ENCODE measurements at regions of chr6 and their contacts with region 1.

Region 1: DNA sequence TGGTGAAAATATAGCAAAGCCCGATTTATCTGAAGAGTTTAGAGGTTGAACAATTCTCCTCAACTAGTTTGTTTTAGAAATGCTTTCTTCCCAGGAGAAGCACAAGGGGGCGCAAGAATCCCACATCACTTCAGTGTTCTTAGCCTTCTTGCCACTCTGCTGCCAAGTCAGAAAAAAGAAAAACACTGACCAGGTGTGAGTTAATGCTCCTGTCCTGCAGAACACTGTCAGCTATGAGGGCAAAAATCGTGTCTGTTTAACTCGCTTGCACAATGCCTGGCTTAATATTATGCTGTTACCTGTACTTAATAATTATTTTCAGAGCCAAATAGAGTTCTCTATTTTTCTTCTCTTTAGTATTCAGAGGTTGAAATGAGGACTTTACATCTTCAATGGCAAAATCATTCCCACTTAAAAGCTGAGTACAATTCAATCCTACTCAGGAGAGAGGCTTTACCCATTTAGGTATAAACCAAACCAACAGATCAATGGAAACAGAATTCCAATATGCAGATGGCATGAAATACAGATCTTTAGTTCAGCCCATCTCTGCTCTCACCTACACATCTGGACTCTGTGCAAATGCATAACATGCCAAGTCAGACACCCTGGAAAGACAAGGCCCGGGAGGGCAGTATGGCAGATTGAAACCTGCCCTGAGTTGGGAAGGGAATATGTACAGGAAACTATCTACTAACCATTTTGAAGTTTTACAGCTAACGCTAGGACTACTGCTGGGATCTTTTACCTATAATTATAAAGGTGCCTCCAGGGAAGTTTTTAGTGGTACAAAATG is 71.4 kb upstream of the TULP1 start:
- DNase-seq: peak in 4 of 5 donors; percentile 42 to 74 (median 62)
- ATAC-seq: peak; percentile 29 to 73 (median 65)
- H3K4me3 ChIP-seq: no peak overlapping the region
- H3K27ac ChIP-seq: peak overlapping the region in 4 of 12 donors; percentile 4 to 92 (median 59)
- H3K4me1 ChIP-seq: peaks cover 0 to 62% (median 15%) of the 10 kb centered on the region in 12 donors
- H3K27me3 ChIP-seq: no peaks in the 10 kb centered on the region
- CTCF ChIP-seq: peak; percentile 65 to 91 (median 87)
- POLR2A ChIP-seq: no peak

Region 2: DNA sequence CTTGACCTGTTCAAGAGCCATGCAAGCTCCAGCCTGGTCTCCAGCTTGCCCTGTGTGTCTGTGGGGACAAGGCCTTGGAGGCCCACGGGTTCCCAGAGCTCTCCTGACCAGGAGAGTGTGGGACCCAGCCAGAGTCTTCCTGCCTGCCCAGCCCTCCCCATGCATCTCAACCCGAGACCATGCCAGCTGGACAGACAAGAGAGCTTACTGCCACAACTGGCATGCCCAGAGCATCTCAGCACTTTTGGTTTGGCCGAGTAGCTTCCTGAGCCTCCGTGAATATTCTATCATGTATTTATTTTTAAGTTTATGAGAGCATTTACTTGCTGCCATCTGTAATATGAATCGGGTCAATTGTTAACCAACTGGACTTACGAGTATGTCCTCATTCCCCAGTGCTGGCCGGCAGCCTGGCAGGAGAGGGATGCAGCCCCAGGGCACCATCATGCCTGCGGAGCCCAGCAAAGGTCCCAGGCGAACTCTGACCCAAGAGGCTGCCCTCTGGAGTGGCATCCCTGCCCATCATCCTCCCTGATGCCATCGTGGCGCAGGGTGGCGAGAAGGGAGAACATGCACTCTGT is 1852.2 kb before region 1 on chr6:
- intact Hi-C with region 1: no loop called
- DNase-seq: peak in 3 of 5 donors; percentile 26 to 62 (median 40)
- ATAC-seq: peak in 2 of 4 donors; percentile 10 to 25
- H3K4me3 ChIP-seq: no peak overlapping the region
- H3K27ac ChIP-seq: peak overlapping the region; percentile 42 to 91 (median 82)
- H3K4me1 ChIP-seq: peaks cover 2 to 96% (median 43%) of the 10 kb centered on the region in 12 donors
- H3K27me3 ChIP-seq: no peaks in the 10 kb centered on the region
- CTCF ChIP-seq: no peak
- POLR2A ChIP-seq: no peak

Region 3: GRCh38 chr6:35275744-35276260 is 308.3 kb before region 1 on chr6:
- intact Hi-C with region 1: no loop called
- DNase-seq: no peak
- ATAC-seq: peak in 3 of 4 donors; percentile 5 to 8 (median 5)
- H3K4me3 ChIP-seq: no peak overlapping the region
- H3K27ac ChIP-seq: peak overlapping the region in 11 of 12 donors; percentile 4 to 71 (median 54)
- H3K4me1 ChIP-seq: peaks cover 0 to 33% (median 18%) of the 10 kb centered on the region in 12 donors
- H3K27me3 ChIP-seq: no peaks in the 10 kb centered on the region
- CTCF ChIP-seq: no peak
- POLR2A ChIP-seq: no peak

Region 4: GRCh38 chr6:35601331-35602132 is 17.4 kb after region 1 on chr6:
- intact Hi-C with region 1: loop called in 1 of 10 experiments (anchors 2 kb)
- DNase-seq: peak in 4 of 5 donors; percentile 17 to 74 (median 43)
- ATAC-seq: peak; percentile 88 to 91 (median 90)
- H3K4me3 ChIP-seq: peak overlapping the region in 10 of 12 donors; percentile 5 to 46 (median 27)
- H3K27ac ChIP-seq: peak overlapping the region; percentile 84 to 100 (median 94)
- H3K4me1 ChIP-seq: peaks cover 29 to 100% (median 45%) of the 10 kb centered on the region in 12 donors
- H3K27me3 ChIP-seq: no peaks in the 10 kb centered on the region
- CTCF ChIP-seq: no peak
- POLR2A ChIP-seq: no peak

Region 5: DNA sequence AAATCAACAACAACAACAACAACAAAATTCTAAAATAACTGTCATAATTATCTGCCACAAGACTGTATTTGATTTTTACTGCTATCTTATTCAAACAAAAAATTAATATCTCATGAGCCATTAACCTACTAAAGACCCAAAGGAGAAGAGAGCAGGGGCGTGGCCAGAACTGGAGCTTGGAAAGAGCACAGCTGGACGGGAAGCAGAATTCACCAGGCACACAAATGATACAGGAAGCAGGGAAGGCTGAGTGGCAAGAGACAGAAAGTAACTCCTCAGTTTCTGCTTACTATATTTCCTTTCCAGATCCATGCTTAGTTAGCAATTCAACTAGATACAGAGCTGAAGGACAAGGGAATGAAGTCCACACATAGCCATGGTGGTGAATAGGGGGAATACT is 50.2 kb after region 1 on chr6:
- intact Hi-C with region 1: loop called in 2 of 10 experiments (anchors 5 to 10 kb)
- DNase-seq: peak in 4 of 5 donors; percentile 25 to 58 (median 34)
- ATAC-seq: peak; percentile 20 to 73 (median 68)
- H3K4me3 ChIP-seq: no peak overlapping the region
- H3K27ac ChIP-seq: peak overlapping the region in 5 of 12 donors; percentile 2 to 23 (median 18)
- H3K4me1 ChIP-seq: peaks cover 0 to 16% (median 7%) of the 10 kb centered on the region in 12 donors
- H3K27me3 ChIP-seq: no peaks in the 10 kb centered on the region
- CTCF ChIP-seq: no peak
- POLR2A ChIP-seq: no peak

Region 6: GRCh38 chr6:35650015-35650414 is 65.9 kb after region 1 on chr6:
- intact Hi-C with region 1: no loop called
- DNase-seq: no peak
- ATAC-seq: no peak
- H3K4me3 ChIP-seq: no peak overlapping the region
- H3K27ac ChIP-seq: no peak overlapping the region
- H3K4me1 ChIP-seq: peaks cover 0 to 51% (median 0%) of the 10 kb centered on the region in 12 donors
- H3K27me3 ChIP-seq: no peaks in the 10 kb centered on the region
- CTCF ChIP-seq: no peak
- POLR2A ChIP-seq: no peak

Region 7: GRCh38 chr6:35731736-35732532 is 147.8 kb after region 1 on chr6:
- intact Hi-C with region 1: loop called (anchors 1 to 2 kb)
- DNase-seq: peak; percentile 96 to 99 (median 97)
- ATAC-seq: peak; percentile 57 to 80 (median 76)
- H3K4me3 ChIP-seq: peak overlapping the region; percentile 56 to 98 (median 73)
- H3K27ac ChIP-seq: peak overlapping the region; percentile 96 to 100 (median 100)
- H3K4me1 ChIP-seq: peaks cover 21 to 83% (median 41%) of the 10 kb centered on the region in 12 donors
- H3K27me3 ChIP-seq: no peaks in the 10 kb centered on the region
- CTCF ChIP-seq: peak in 5 of 12 donors; percentile 8 to 31 (median 25)
- POLR2A ChIP-seq: peak in 1 of 2 donors; percentile 39